ACHN (cell line): ENCODE measurements at regions of chr1 and their contacts with region 1.

Region 1: GRCh38 chr1:23114424-23115079 is 54.1 kb downstream of the LUZP1 start:
- DNase-seq: no peak

Region 2: DNA sequence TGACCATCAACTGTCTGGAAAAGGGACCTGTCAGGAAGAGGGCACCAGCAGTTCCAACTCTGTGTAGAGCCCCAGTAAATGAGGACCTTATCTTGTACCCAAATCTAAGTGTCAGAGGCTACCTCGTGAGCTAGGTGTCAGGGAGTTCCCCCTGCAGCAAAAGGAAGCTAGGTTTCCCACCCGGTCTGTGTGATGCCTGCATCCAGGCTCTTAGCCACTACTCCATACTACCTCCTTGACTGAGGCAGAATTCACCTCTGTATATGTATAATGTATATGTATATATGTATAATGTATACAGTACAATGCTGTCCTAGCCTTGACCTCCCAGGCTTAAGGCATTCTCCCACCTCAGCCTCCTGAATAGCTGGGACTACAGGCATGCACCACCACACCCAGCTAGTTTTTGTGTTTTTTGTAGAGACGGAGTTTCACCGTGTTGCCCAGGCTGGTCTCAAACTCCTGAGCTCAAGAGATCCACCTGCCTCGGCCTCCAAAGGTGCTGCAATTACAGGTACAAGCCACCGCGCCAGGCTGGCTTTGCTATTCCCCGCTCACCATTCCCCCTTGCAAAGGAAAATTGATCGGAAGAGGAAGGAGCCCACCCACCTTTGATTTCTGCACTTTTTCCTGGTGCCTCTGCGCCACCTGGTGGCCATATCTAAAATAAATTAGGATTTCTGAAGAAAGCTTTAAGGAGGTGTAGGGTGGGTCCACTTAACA is 69.8 kb after region 1 on chr1:
- in situ Hi-C with region 1: loop called (anchors 5 kb)
- DNase-seq: peak; percentile 36